Mammary epithelial cell (primary cell): ENCODE measurements at regions of chr1 and their contacts with region 1.

Region 1: GRCh38 chr1:212595787-212596714 is 12.5 kb upstream of the ATF3 start:
- DNase-seq: peak; percentile 98
- H3K4me3 ChIP-seq: peak overlapping the region; percentile 2 to 7 (median 5)
- H3K27ac ChIP-seq: peak overlapping the region; percentile 95
- H3K4me1 ChIP-seq: peaks cover 27% of the 10 kb centered on the region
- H3K27me3 ChIP-seq: no peaks in the 10 kb centered on the region
- CTCF ChIP-seq: peak; percentile 75 to 81

Region 2: GRCh38 chr1:212488397-212489283 is 107.4 kb before region 1 on chr1:
- CTCF ChIA-PET with region 1: no interaction called
- dilution Hi-C with region 1: no loop called
- in situ Hi-C with region 1: loop called in 1 of 2 experiments (anchors 10 kb)
- intact Hi-C with region 1: loop called (anchors 1 kb)
- DNase-seq: peak; percentile 96
- H3K4me3 ChIP-seq: no peak overlapping the region
- H3K27ac ChIP-seq: peak overlapping the region; percentile 33
- H3K4me1 ChIP-seq: peaks cover 24% of the 10 kb centered on the region
- H3K27me3 ChIP-seq: no peaks in the 10 kb centered on the region
- CTCF ChIP-seq: no peak

Region 3: GRCh38 chr1:212558693-212559480 is 37.2 kb before region 1 on chr1:
- CTCF ChIA-PET with region 1: no interaction called
- dilution Hi-C with region 1: no loop called
- in situ Hi-C with region 1: no loop called
- intact Hi-C with region 1: loop called (anchors 1 kb)
- DNase-seq: peak; percentile 93
- H3K4me3 ChIP-seq: peak overlapping the region; percentile 59 to 78 (median 59)
- H3K27ac ChIP-seq: peak overlapping the region; percentile 88
- H3K4me1 ChIP-seq: peaks cover 6% of the 10 kb centered on the region
- H3K27me3 ChIP-seq: no peaks in the 10 kb centered on the region
- CTCF ChIP-seq: no peak

Region 4: GRCh38 chr1:212566522-212567479 is 29.2 kb before region 1 on chr1:
- CTCF ChIA-PET with region 1: no interaction called
- dilution Hi-C with region 1: no loop called
- in situ Hi-C with region 1: no loop called
- intact Hi-C with region 1: loop called (anchors 2 kb)
- DNase-seq: peak; percentile 82
- H3K4me3 ChIP-seq: peak overlapping the region; percentile 45 to 62 (median 51)
- H3K27ac ChIP-seq: peak overlapping the region; percentile 69
- H3K4me1 ChIP-seq: peaks cover 12% of the 10 kb centered on the region
- H3K27me3 ChIP-seq: peaks cover 2% of the 10 kb centered on the region
- CTCF ChIP-seq: no peak